Left ventricle myocardium inferior (tissue), 1 donor: ENCODE measurements at regions of chr15 and their contacts with region 1.

Region 1: DNA sequence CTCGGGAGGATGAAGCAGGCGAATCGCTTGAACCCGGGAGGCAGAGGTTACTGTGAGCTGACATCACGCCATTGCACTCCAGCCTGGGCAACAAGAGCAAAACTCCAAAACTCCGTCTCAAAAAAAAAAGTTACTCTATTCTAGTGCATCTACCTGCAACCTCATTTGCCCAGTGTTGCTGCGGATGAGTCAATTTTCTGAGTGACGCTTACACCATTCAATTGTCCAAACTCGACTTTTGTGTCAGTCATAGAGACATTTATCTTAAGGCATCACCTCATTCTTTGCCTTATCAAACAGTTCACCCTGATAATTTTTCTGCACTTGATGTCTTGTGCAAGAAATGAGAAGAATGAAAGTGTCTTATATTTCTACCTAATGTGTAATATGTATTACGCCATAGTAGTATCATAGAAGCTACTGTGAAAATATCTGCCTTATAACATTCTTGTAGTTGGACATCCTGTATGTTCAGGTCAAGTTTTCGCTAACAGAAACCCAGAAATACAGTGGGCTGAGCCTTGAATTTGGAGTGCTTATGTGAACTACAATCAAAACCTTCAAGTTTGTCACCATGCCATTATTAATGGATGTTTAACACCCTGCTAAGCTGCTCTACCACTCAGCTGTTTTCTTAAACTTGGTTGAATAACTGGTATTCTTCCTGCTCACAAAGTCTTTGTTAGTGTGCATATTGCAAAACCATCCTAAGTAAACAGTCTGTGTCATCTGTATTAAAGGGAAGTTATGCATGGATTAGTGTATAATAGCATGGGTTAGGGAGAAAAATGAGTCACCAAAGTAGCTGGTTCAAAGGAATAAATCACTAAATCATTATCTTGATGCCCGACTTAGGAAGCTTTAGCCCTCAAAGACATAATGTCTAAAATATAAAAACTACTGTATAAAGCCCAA is 531.0 kb upstream of the NR2F2 start:
- DNase-seq: no peak
- H3K4me3 ChIP-seq: no peak overlapping the region
- H3K27ac ChIP-seq: no peak overlapping the region
- H3K4me1 ChIP-seq: no peaks in the 10 kb centered on the region
- H3K27me3 ChIP-seq: no peaks in the 10 kb centered on the region
- CTCF ChIP-seq: no peak

Region 2: DNA sequence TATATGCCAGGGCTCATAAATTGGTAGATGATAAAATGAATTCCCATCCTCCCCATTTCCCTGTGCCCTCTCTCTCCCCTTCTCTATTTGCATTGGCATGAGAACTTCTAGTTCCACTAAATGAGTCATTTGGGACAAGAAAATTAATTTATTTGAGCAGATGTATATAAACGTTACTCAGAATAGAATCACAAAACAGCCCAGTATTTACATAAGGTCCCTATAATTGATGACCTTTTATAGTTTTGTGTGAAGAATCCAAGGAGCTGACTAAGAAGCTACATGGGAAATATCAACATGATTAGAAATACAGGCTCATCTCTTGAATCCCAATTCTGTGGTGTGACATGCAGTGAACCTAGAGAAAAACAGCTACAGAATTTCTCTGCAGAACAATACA is 86.8 kb before region 1 on chr15:
- intact Hi-C with region 1: no loop called
- DNase-seq: no peak
- H3K4me3 ChIP-seq: no peak overlapping the region
- H3K27ac ChIP-seq: no peak overlapping the region
- H3K4me1 ChIP-seq: no peaks in the 10 kb centered on the region
- H3K27me3 ChIP-seq: no peaks in the 10 kb centered on the region
- CTCF ChIP-seq: no peak

Region 3: DNA sequence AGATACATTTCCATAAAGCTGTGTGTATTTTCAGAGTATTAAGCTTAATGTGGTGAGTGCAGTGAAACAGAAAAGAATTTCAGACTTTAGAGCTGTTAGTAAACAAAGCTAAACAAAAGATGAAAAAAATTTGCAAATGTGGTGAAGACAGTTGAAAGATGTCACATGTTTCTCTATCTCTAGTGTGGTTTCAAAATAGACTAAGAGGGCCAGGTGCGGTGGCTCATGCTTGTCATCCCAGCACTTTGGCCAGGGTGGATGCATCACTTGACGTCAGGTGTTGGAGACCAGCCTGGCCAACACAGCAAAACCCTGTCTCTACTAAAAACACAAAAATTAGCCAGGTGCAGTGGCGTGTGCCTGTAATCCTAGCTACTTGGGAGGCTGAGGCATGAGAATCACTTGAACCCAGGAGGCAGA is 64.9 kb after region 1 on chr15:
- intact Hi-C with region 1: loop called (anchors 10 kb)
- DNase-seq: no peak
- H3K4me3 ChIP-seq: no peak overlapping the region
- H3K27ac ChIP-seq: no peak overlapping the region
- H3K4me1 ChIP-seq: no peaks in the 10 kb centered on the region
- H3K27me3 ChIP-seq: no peaks in the 10 kb centered on the region
- CTCF ChIP-seq: no peak

Region 4: DNA sequence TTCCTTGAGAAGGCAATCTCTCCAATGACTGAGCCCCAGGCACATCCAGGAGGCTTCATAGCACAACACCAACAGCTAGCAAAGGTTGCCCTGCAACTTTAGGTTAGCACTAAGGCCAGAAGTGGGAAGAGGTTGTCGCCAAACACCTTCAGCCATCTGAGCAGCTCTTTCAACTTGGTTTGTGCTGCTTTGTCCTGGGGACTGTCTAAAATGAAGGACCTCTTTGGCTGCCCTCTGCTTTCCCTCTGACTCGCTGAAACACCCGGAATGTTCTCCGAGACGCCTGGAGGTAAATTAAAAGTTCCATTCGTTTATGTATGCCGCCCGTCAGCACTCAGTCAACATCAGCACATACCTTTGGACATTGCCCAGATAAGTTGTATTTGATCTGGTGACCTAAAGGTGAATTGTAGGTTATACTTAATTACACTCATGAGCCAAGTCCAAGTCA is 409.8 kb after region 1 on chr15:
- intact Hi-C with region 1: no loop called
- DNase-seq: no peak
- H3K4me3 ChIP-seq: no peak overlapping the region
- H3K27ac ChIP-seq: no peak overlapping the region
- H3K4me1 ChIP-seq: no peaks in the 10 kb centered on the region
- H3K27me3 ChIP-seq: no peaks in the 10 kb centered on the region
- CTCF ChIP-seq: no peak